ENCODE measurements at regions of chr6 and their contacts with region 1.

Region 1: GRCh38 chr6:134185277-134185676 is 132.6 kb downstream of the SGK1 start:
- DNase-seq: no peak
- ATAC-seq: no peak
- H3K4me3 ChIP-seq: no peak overlapping the region
- H3K27ac ChIP-seq: no peak overlapping the region
- H3K4me1 ChIP-seq: no peaks in the 10 kb centered on the region
- H3K27me3 ChIP-seq: no peaks in the 10 kb centered on the region
- CTCF ChIP-seq: no peak

Region 2: GRCh38 chr6:133814797-133815196 is 370.5 kb before region 1 on chr6:
- intact Hi-C with region 1: no loop called
- DNase-seq: no peak
- ATAC-seq: peak in 1 of 4 donors; percentile 56
- H3K4me3 ChIP-seq: no peak overlapping the region
- H3K27ac ChIP-seq: no peak overlapping the region
- H3K4me1 ChIP-seq: no peaks in the 10 kb centered on the region
- H3K27me3 ChIP-seq: peaks cover 0 to 1% (median 0%) of the 10 kb centered on the region in 3 donors
- CTCF ChIP-seq: no peak

Region 3: GRCh38 chr6:134235937-134236751 is 50.9 kb after region 1 on chr6:
- intact Hi-C with region 1: loop called in 1 of 2 experiments (anchors 5 kb)
- DNase-seq: no peak
- ATAC-seq: no peak
- H3K4me3 ChIP-seq: no peak overlapping the region
- H3K27ac ChIP-seq: no peak overlapping the region
- H3K4me1 ChIP-seq: no peaks in the 10 kb centered on the region
- H3K27me3 ChIP-seq: no peaks in the 10 kb centered on the region
- CTCF ChIP-seq: no peak

Region 4: GRCh38 chr6:134453870-134454510 is 268.7 kb after region 1 on chr6:
- intact Hi-C with region 1: no loop called
- DNase-seq: no peak
- ATAC-seq: no peak
- H3K4me3 ChIP-seq: no peak overlapping the region
- H3K27ac ChIP-seq: no peak overlapping the region
- H3K4me1 ChIP-seq: peaks cover 1% of the 10 kb centered on the region
- H3K27me3 ChIP-seq: no peaks in the 10 kb centered on the region
- CTCF ChIP-seq: no peak

Measured in psoas muscle (tissue), 8 donors.